ENCODE measurements at regions of chr15 and their contacts with region 1.

Region 1: DNA sequence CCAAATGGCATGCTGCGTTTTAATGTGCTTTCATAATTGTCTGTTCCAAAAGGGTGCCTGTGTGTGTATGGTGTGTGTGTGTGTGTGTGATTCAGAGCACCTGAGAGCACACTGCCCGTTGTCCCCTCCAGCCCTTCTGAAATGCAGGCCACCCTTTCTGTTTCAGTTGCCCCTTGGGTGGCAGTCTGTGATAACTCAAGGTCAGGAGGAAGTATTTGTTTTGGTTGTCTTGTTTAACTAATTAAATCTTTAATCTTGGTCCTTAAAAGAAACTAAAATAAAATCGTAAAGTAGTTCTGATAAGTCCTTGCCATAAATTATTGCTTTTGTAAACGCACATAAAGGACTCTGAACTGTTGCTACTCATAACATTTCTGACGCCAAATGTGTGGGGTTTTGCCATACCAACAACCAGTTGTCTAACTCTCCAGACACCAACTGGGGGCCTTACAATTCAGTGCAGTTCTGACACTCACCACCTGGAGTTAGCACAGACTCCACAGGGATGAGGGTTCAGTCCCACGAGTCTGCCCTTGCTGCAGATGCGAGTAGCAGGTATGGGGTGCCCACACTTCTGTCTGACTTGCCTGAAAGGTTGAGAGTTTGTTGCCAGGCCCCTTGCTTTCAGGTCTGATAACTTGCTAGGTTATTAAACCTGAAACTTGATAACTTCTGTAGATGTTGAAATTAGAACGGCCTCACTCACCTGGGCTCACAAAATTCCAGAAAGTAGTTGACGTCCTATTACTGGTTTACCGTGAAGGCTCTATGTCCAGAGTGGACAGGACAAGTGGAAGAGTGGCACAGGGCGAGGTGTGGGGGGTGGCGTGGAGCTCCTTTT is 157.3 kb downstream of the IGF1R start:
- DNase-seq: no peak
- ATAC-seq: no peak
- H3K4me3 ChIP-seq: no peak overlapping the region
- H3K27ac ChIP-seq: no peak overlapping the region
- H3K4me1 ChIP-seq: peaks cover 4 to 9% of the 10 kb centered on the region in 2 donors
- H3K27me3 ChIP-seq: no peaks in the 10 kb centered on the region

Region 2: DNA sequence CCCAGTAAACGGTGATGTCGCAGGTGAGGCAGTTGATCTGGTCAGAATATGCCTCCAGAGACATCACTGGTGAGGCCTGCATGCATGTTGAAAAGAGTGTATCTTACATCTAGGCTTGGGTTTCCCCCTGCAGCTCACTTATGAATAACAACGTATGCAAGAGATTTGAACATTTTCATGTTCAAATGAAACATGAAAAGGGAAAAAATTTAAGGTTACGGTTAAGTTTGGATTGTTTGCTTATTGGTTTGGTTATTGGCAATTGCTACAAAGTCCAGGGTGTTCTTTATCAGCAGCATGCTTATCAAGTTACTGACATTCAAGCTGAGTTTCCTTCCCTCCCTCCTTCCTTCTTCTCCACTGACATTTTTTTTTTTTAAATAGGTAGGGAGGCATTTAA is 34.1 kb before region 1 on chr15:
- intact Hi-C with region 1: no loop called
- DNase-seq: no peak
- ATAC-seq: no peak
- H3K4me3 ChIP-seq: no peak overlapping the region
- H3K27ac ChIP-seq: no peak overlapping the region
- H3K4me1 ChIP-seq: peaks cover 0 to 6% of the 10 kb centered on the region in 2 donors
- H3K27me3 ChIP-seq: no peaks in the 10 kb centered on the region

Region 3: GRCh38 chr15:98842192-98842966 is 36.7 kb after region 1 on chr15:
- intact Hi-C with region 1: loop called in 1 of 2 experiments (anchors 5 kb)
- DNase-seq: no peak
- ATAC-seq: no peak
- H3K4me3 ChIP-seq: no peak overlapping the region
- H3K27ac ChIP-seq: no peak overlapping the region
- H3K4me1 ChIP-seq: peaks cover 0 to 4% of the 10 kb centered on the region in 2 donors
- H3K27me3 ChIP-seq: no peaks in the 10 kb centered on the region